Heart right ventricle (tissue), 16 donors: ENCODE measurements at regions of chr4 and their contacts with region 1.

Region 1: DNA sequence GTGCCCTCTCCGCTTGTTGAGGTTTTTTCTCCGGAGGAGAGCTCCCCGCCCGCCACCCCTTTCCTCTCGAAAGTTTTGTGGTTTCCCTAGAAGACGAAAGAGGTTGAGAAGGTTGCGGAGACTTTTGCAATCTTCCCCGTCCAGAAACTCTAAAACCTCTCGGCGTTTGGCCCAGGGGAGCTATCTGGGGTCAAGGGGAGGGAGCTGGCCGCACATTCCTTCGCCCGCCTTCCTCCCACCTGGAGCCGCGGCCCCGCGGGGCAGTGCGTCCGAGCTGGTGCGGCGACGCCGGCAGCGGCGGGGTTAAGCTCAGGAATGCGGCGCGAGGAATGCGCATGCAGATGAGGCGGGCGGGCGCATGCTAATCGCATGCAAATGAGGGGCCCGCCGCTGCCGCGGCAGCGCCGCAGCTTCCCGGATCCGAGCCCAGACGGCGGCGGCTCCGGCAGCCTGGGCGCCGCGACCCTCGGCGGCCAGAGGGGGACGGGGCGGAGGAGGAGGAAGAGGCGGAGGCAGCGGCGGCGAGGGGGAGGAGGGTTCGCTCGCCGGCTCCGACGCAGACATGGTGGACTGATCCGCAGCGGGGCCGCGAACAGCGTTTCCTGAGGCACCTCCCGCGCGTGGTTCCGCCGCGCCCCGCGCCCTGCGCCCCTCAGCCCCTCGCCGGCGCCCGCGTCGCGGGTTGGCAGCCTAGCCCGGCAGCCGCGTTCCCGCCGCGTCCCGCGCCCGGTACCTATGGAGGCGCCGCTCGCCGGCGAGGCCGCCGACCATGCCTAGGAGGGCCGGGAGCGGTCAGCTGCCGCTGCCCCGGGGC is at the start of gene WWC2:
- DNase-seq: peak; percentile 89 to 92
- ATAC-seq: peak; percentile 92 to 96 (median 94)
- H3K4me3 ChIP-seq: peak within 1 kb of the TSS; percentile 56 to 93 (median 80)
- H3K27ac ChIP-seq: peak within 1 kb of the TSS; percentile 91 to 100 (median 98)
- H3K4me1 ChIP-seq: peaks cover 0 to 41% (median 29%) of the 10 kb centered on the region in 9 donors
- H3K27me3 ChIP-seq: peaks cover 0 to 55% (median 0%) of the 10 kb centered on the region in 7 donors
- CTCF ChIP-seq: peak in 4 of 9 donors; percentile 11 to 25 (median 20)
- total RNA-seq, gene WWC2: 25.7 to 37.4 (median 32.6) TPM

Region 2: DNA sequence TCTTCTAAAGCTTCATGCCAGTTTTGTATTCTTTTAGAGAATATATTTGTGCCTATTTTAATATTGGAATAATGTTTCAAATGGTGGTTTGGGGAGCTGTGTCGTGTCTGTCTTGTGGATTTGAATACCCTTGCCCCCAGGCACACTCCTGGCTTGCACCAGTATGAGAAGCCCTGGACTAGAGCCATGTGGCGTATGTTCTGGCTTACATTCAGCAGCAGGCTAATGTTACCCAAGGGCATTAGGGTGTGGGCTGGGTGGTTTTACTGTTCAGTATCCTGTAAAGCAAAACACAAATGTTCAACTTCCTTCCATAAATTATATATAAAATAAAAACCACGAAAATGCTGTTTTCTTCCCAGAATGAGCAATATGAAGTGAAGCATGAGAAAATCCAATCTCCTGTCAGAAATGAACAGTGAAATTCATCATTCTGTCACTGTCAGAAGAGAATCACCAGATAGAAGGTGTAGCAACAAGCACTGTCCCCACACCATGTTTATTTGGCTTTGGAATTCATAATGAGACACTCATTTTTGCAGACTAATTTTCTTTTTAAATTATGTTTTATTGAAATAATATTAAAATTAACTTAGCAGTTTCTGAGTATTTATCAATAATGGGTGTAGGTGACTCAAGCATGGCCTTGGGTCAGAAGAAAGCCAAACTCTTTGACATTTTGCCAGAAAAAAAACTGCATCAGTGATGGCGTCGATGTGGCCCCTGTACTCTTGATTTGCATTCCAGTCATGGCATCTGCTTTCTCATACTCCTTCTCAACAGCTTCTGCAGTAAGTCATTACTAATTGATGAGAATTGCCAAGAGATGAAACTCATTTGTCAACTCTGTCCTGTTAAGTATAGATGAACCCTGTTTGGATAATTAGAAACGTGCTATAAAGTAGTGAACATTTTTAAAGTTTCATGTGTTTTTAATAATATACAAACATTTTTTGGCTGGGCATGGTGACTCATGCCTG is 43.9 kb after region 1 on chr4:
- intact Hi-C with region 1: loop called in 4 of 10 experiments (anchors 1 to 5 kb)
- DNase-seq: peak; percentile 54 to 75
- ATAC-seq: peak; percentile 83 to 96 (median 92)
- H3K4me3 ChIP-seq: peak overlapping the region in 1 of 10 donors; percentile 8
- H3K27ac ChIP-seq: peak overlapping the region in 5 of 10 donors; percentile 10 to 63 (median 36)
- H3K4me1 ChIP-seq: peaks cover 3 to 83% (median 57%) of the 10 kb centered on the region in 9 donors
- H3K27me3 ChIP-seq: no peaks in the 10 kb centered on the region
- CTCF ChIP-seq: no peak

Region 3: GRCh38 chr4:183165376-183165775 is 66.4 kb after region 1 on chr4:
- intact Hi-C with region 1: loop called in 1 of 10 experiments (anchors 10 kb)
- DNase-seq: no peak
- ATAC-seq: peak in 5 of 8 donors; percentile 27 to 72 (median 62)
- H3K4me3 ChIP-seq: no peak overlapping the region
- H3K27ac ChIP-seq: peak overlapping the region; percentile 12 to 72 (median 45)
- H3K4me1 ChIP-seq: peaks cover 10 to 52% (median 33%) of the 10 kb centered on the region in 9 donors
- H3K27me3 ChIP-seq: no peaks in the 10 kb centered on the region
- CTCF ChIP-seq: no peak

Region 4: GRCh38 chr4:183241322-183241640 is 142.4 kb after region 1 on chr4:
- intact Hi-C with region 1: loop called in 1 of 10 experiments (anchors 5 kb)
- DNase-seq: no peak
- ATAC-seq: peak in 5 of 8 donors; percentile 11 to 62 (median 49)
- H3K4me3 ChIP-seq: no peak overlapping the region
- H3K27ac ChIP-seq: no peak overlapping the region
- H3K4me1 ChIP-seq: peaks cover 0 to 24% (median 8%) of the 10 kb centered on the region in 9 donors
- H3K27me3 ChIP-seq: no peaks in the 10 kb centered on the region
- CTCF ChIP-seq: no peak

Region 5: GRCh38 chr4:183504064-183504929 is 405.4 kb after region 1 on chr4:
- intact Hi-C with region 1: loop called in 1 of 10 experiments (anchors 5 kb)
- DNase-seq: peak; percentile 99
- ATAC-seq: peak; percentile 94 to 99 (median 96)
- H3K4me3 ChIP-seq: peak overlapping the region; percentile 77 to 100 (median 98)
- H3K27ac ChIP-seq: peak overlapping the region; percentile 78 to 99 (median 97)
- H3K4me1 ChIP-seq: peaks cover 0 to 50% (median 19%) of the 10 kb centered on the region in 9 donors
- H3K27me3 ChIP-seq: no peaks in the 10 kb centered on the region
- CTCF ChIP-seq: peak in 7 of 9 donors; percentile 9 to 55 (median 21)